H1 (cell line): ENCODE measurements at regions of chr2 and their contacts with region 1.

Region 1: GRCh38 chr2:189997016-189997415 is 65.5 kb downstream of the MSTN start:
- DNase-seq: no peak
- H3K4me3 ChIP-seq: no peak overlapping the region
- H3K27ac ChIP-seq: no peak overlapping the region
- H3K4me1 ChIP-seq: no peaks in the 10 kb centered on the region
- H3K27me3 ChIP-seq: no peaks in the 10 kb centered on the region
- CTCF ChIP-seq: no peak
- EP300 ChIP-seq: no peak
- POLR2A ChIP-seq: no peak
- RAD21 ChIP-seq: no peak

Region 2: GRCh38 chr2:189685540-189686229 is 311.3 kb before region 1 on chr2:
- CTCF ChIA-PET with region 1: no interaction called
- POLR2A ChIA-PET with region 1: no interaction called
- DNase-seq: peak in 1 of 2 experiments; percentile 48
- H3K4me3 ChIP-seq: no peak overlapping the region
- H3K27ac ChIP-seq: no peak overlapping the region
- H3K4me1 ChIP-seq: 0 out of 7 replicates have a peak, but pooled peaks cover 0 to 3% (median 0%) of the 10 kb centered on the region in 4 experiments
- H3K27me3 ChIP-seq: no peaks in the 10 kb centered on the region
- CTCF ChIP-seq: no peak
- EP300 ChIP-seq: no peak
- POLR2A ChIP-seq: no peak
- RAD21 ChIP-seq: no peak

Region 3: DNA sequence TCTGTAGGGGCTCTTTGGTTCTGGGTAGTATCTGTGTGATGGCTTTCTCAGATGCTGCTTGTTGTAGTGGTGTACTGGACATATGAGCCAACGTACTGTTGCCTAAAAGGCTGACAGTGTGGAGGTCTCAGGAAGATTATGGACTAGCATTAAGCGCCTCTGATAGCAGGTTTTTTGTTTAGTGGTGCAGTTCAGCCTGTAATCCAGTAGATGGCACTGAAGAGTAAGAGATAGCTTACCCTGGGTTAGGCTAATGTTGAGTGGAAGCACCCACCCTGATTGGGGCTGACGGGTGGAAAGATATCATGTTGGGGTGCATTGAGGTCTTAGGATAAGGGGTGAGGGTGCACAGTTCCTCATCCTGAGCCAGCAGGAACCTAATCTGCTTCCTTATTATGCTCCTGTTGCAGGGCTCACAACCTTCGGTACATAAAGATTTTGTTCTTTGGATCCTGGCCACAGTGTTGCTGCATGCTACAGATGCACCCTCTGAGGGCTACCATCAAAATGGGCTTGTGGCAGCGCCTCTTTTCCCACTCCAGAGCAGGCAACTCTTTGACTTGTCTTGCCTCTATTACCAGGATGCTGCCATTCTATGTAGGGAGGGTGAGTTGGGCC is 14.1 kb before region 1 on chr2:
- CTCF ChIA-PET with region 1: interaction called, 13 read pairs
- POLR2A ChIA-PET with region 1: no interaction called
- DNase-seq: peak in 1 of 2 experiments; percentile 45
- H3K4me3 ChIP-seq: no peak overlapping the region
- H3K27ac ChIP-seq: no peak overlapping the region
- H3K4me1 ChIP-seq: no peaks in the 10 kb centered on the region
- H3K27me3 ChIP-seq: no peaks in the 10 kb centered on the region
- CTCF ChIP-seq: peak; percentile 1 to 78 (median 61)
- EP300 ChIP-seq: no peak
- POLR2A ChIP-seq: no peak
- RAD21 ChIP-seq: peak; percentile 82 to 83

Region 4: GRCh38 chr2:190105554-190105953 is 108.5 kb after region 1 on chr2:
- CTCF ChIA-PET with region 1: no interaction called
- POLR2A ChIA-PET with region 1: no interaction called
- DNase-seq: no peak
- H3K4me3 ChIP-seq: no peak overlapping the region
- H3K27ac ChIP-seq: no peak overlapping the region
- H3K4me1 ChIP-seq: no peaks in the 10 kb centered on the region
- H3K27me3 ChIP-seq: peaks cover 0 to 1% (median 0%) of the 10 kb centered on the region in 4 experiments; a peak in 1 of 7 replicates
- CTCF ChIP-seq: no peak
- EP300 ChIP-seq: no peak
- POLR2A ChIP-seq: no peak
- RAD21 ChIP-seq: no peak